Cardiac septum (tissue), 1 donor: ENCODE measurements at regions of chr7 and their contacts with region 1.

Region 1: GRCh38 chr7:37440738-37441385 is 7.8 kb downstream of the ELMO1 start:
- DNase-seq: no peak

Region 2: DNA sequence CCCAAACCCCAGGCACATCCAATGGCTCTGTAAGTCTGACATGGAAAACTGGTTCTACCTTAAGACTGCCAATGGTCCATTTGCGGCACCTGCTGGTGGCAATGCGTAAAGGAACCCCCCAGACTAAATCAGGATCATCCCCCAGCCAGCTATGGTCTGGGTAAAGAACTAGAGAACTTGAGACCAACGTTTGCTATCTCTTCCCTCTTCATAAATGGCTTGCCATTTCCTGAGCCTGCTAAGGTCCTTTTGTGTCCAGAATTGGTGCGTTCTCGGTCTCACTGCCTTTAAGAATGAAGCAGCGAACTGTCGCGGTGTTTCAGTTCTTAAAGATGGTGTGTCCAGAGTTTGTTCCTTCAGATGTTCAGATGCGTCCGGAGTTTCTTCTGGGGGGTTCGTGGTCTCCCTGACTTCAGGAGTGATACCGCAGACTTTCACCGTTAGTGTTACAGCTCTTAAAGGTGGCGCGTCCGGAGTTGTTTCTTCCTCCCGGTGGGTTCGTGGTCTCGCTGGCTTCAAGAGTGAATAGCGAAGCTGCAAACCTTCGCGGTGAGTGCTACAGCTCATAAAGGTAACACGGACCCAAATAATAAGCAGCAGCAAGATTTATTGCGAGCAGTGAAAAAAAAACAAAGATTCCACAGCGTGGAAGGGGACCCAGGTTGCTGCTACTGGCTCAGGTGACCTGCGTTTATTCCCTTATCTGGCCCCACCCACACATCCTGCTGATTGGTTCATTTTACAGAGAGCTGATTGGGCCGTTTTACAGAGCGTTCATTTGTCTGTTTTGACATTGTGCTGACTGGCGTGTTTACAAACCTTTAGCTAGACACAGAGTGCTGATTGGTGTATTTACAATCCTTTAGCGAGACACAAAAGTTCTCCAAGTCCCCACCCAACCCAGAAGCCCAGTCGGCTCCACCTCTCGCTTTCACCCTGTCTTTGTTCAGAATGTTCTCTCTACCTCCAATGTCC is 87.6 kb before region 1 on chr7:
- intact Hi-C with region 1: loop called (anchors 2 kb)
- DNase-seq: no peak

Region 3: DNA sequence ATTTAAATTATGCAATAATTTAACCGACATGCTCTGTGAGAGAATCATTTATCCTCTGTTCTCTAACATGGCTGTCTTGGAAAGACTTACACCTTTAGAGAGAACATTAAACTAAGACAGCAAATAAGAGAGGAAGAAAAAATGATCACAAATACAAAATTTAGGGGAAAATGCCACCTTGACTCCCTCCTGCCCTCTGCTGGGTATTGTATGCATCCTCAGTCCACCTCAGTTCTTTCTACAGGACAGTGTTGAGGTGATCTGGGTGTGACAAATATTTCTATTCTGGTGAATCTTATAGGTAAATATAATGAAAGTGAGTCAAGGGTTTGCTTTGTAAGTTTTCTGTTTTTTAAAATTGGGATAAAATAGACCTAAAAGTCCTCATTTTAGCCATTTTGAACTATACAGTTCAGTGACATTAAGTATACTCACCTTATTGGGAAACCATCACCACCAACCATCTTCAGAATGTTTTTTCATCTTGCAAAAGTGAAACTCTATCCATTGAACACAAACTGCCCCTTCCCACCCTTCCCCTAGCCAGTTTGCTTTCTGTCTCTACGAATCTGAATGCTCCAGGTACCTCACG is 69.3 kb after region 1 on chr7:
- intact Hi-C with region 1: no loop called
- DNase-seq: no peak

Region 4: GRCh38 chr7:37570145-37570544 is 129.3 kb after region 1 on chr7:
- intact Hi-C with region 1: no loop called
- DNase-seq: no peak